Motor neuron (in vitro differentiated cells): ENCODE measurements at regions of chr3 and their contacts with region 1.

Region 1: GRCh38 chr3:154758109-154758868 is 321.8 kb upstream of the MME start:
- ATAC-seq: peak in 3 of 8 experiments; percentile 27 to 46 (median 34)
- H3K4me3 ChIP-seq: no peak overlapping the region
- H3K27ac ChIP-seq: no peak overlapping the region
- H3K4me1 ChIP-seq: no peaks in the 10 kb centered on the region

Region 2: GRCh38 chr3:154931484-154931883 is 173.2 kb after region 1 on chr3:
- in situ Hi-C with region 1: loop called in 1 of 9 experiments (anchors 25 kb)
- ATAC-seq: peak in 2 of 8 experiments; percentile 84 to 86
- H3K4me3 ChIP-seq: no peak overlapping the region
- H3K27ac ChIP-seq: no peak overlapping the region
- H3K4me1 ChIP-seq: no peaks in the 10 kb centered on the region

Region 3: DNA sequence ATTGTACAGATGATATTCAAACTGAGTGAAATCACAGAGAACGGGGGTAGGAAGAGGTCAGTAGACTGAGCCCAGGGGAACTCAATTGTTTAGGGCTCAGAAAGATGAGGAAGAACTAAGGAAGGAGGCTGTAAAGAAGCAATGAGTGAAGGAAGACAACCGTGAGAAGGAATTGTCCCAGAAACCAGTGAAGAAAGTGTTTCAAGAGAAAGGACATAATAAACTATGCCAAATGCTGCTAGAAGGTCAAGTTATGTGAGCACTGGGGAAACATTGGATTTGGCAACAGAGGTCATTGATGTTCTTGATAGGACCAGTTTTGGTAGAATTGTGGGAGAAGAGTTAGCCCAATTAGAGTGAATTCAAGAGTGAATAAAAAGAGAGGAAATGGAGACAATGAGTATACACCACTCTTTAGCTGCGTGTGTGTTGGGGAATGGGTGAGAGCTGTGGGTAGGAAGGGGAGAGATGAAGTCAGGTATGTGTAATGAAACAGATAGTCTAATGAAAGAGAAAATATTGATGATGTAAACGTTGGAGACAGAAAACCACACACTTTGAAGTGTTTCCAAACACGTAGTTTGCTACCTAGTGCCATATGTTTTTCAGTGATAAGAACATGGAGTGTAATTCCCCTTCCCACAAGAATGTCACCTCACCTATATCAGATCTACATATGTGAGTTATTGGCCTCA is 279.4 kb after region 1 on chr3:
- in situ Hi-C with region 1: no loop called
- ATAC-seq: no peak
- H3K4me3 ChIP-seq: no peak overlapping the region
- H3K27ac ChIP-seq: no peak overlapping the region
- H3K4me1 ChIP-seq: no peaks in the 10 kb centered on the region

Region 4: DNA sequence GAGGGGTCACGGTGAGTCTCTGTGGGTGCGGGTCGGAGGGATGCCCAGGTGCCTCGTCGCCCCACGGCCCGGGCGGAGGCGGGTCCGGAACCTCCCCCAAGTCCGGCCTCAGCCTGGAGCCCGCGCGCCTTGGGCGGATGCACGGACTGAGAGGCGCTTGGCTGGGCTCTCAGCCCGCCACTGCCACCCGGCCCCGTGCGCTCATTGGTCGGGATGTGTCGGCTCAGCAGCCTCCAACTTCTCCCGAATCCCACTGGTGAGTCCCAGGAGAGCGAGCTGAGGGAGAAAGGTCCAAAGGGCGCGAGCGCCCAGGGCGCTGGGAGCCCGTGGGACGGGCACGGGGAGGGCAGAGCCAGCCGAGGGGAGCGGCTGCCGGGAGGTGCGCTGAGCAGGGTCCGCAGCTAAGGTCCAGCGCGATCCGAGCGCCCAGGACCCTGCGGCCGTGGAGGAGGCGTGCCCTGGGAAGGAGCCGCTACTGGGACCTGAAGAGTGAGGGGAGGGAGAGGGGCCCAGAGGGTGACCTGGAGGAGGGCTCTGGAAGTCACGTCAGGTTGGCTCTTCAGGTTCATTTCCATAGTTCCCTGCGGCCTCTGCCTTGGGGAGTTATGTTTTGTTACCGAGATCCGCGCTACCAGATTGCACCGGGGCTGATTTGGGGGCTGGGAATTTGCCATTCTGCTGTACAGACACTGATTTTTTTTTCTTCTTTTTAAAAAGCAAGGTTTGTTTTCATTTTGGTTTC is 321.6 kb after region 1 on chr3 and contains the start of gene MME:
- in situ Hi-C with region 1: loop called in 1 of 9 experiments (anchors 25 kb)
- ATAC-seq: peak; percentile 90 to 97 (median 92)
- H3K4me3 ChIP-seq: peak within 1 kb of the TSS; percentile 37 to 57 (median 48)
- H3K27ac ChIP-seq: no peak within 1 kb of the TSS
- H3K4me1 ChIP-seq: peaks cover 0 to 3% of the 10 kb centered on the region in 2 donors
- total RNA-seq, gene MME: 0.49 to 47.3 (median 1.2) TPM